Activated CD8-positive, alpha-beta memory T cell treated with anti-CD3 and anti-CD28 coated beads, Interleukin-2, amount 10 ng/mL, durations not matched to agents 7 days and 5 days (primary cell): ENCODE measurements at regions of chr5 and their contacts with region 1.

Region 1: DNA sequence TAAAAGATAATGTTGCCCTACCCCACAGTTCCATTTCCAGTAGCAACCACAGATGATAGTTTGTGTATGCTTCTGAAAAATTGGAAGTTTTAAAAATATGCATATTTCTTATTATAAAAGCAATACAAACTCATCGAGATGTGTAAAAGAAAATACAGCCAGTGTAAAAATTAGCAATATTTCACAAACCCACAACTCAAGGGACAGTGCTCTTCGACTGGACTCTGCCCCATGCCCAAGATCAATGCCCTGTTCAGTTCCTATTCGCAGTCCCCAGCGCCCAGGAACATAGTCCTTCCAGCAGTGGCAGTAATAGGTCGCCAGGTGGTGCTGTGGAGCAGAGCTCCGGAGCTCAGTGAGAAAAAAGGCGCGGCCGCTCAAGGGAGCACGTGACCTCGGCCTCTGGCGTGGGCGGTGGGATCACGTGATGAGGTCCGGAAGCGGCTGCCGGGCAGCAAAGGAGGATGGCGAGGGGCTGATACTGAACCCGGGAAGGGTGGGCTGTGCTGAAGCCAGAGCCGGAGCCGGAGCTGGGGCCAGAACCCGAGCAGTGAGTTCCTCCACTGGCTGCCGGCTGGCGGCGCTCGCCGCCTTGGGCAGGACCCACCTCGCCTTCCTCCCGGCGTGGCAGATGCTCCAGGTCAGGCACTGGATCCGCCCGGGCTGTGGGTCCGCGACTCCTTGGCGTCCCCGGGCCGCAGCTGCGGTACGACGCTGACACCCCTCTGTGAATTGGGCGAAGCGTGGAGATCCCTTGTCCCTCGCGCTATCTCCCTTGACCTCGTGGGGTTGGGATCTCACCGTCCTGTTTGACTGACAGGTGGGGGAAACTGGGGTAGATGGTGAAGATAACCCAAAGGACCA is at the start of gene SLC36A1:
- DNase-seq: peak; percentile 95
- ATAC-seq: peak; percentile 95
- H3K4me3 Mint-ChIP-seq: peak within 1 kb of the TSS; percentile 82
- H3K27ac Mint-ChIP-seq: peak within 1 kb of the TSS; percentile 79
- H3K4me1 Mint-ChIP-seq: peaks cover 23% of the 10 kb centered on the region
- H3K27me3 Mint-ChIP-seq: peaks cover 36% of the 10 kb centered on the region
- total RNA-seq, gene SLC36A1: 6.4 to 6.7 TPM

Region 2: GRCh38 chr5:151463137-151464029 is 16.0 kb after region 1 on chr5:
- CTCF ChIA-PET with region 1: interaction called, 30 read pairs
- DNase-seq: no peak
- ATAC-seq: no peak
- H3K4me3 Mint-ChIP-seq: no peak overlapping the region
- H3K27ac Mint-ChIP-seq: no peak overlapping the region
- H3K4me1 Mint-ChIP-seq: peaks cover 7% of the 10 kb centered on the region
- H3K27me3 Mint-ChIP-seq: no peaks in the 10 kb centered on the region

Region 3: GRCh38 chr5:151499501-151500035 is 52.2 kb after region 1 on chr5:
- CTCF ChIA-PET with region 1: interaction called, 28 read pairs
- DNase-seq: no peak
- ATAC-seq: no peak
- H3K4me3 Mint-ChIP-seq: no peak overlapping the region
- H3K27ac Mint-ChIP-seq: no peak overlapping the region
- H3K4me1 Mint-ChIP-seq: peaks cover 5% of the 10 kb centered on the region
- H3K27me3 Mint-ChIP-seq: no peaks in the 10 kb centered on the region

Region 4: GRCh38 chr5:151651997-151652645 is 204.7 kb after region 1 on chr5:
- CTCF ChIA-PET with region 1: interaction called, 37 read pairs
- DNase-seq: peak; percentile 79
- ATAC-seq: peak; percentile 98
- H3K4me3 Mint-ChIP-seq: no peak overlapping the region
- H3K27ac Mint-ChIP-seq: no peak overlapping the region
- H3K4me1 Mint-ChIP-seq: no peaks in the 10 kb centered on the region
- H3K27me3 Mint-ChIP-seq: peaks cover 18% of the 10 kb centered on the region

Region 5: GRCh38 chr5:151664694-151665585 is 217.5 kb after region 1 on chr5:
- CTCF ChIA-PET with region 1: no interaction called
- DNase-seq: no peak
- ATAC-seq: no peak
- H3K4me3 Mint-ChIP-seq: no peak overlapping the region
- H3K27ac Mint-ChIP-seq: no peak overlapping the region
- H3K4me1 Mint-ChIP-seq: peaks cover 13% of the 10 kb centered on the region
- H3K27me3 Mint-ChIP-seq: peaks cover 5% of the 10 kb centered on the region

Region 6: DNA sequence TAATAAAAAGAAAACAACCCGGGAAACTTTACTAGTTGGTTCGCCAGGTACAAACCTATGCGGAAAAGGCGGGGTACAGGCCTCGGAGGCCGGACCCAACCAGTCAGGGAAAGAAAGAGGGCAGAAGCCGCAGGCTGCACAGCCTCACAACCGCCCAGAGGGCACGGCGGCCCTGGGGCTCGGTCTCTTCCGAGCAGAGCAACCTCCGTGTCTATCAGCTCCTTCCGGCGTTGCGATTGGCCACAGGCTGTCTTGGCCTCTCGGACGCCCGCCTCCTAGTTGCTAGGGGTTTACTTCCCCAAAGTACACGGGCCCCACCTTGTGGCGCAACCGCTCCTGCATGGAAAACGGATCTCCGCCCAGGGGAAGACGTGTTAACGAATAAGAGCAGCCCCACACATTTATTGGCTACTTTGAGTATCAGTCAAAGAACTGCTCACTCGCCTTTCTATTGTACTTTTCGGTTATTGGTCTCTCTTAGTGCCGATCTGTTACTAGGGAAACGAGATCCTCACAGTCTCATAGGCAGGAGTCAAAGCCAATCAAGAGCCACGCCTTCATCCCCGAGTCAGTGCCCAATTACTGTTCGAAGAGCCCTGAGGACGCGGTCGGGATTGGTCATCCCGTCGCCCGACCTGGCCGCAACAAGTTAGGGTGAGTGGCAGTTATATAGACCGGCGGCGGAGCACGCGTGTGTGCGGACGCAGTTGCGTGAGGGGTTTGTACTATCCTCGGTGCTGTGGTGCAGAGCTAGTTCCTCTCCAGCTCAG is 324.0 kb after region 1 on chr5 and contains the start of gene G3BP1:
- CTCF ChIA-PET with region 1: interaction called, 20 read pairs
- DNase-seq: peak; percentile 100
- ATAC-seq: peak; percentile 82
- H3K4me3 Mint-ChIP-seq: peak within 1 kb of the TSS; percentile 83
- H3K27ac Mint-ChIP-seq: peak within 1 kb of the TSS; percentile 92
- H3K4me1 Mint-ChIP-seq: peaks cover 34% of the 10 kb centered on the region
- H3K27me3 Mint-ChIP-seq: no peaks in the 10 kb centered on the region
- total RNA-seq, gene G3BP1: 192 to 279 TPM

Region 7: DNA sequence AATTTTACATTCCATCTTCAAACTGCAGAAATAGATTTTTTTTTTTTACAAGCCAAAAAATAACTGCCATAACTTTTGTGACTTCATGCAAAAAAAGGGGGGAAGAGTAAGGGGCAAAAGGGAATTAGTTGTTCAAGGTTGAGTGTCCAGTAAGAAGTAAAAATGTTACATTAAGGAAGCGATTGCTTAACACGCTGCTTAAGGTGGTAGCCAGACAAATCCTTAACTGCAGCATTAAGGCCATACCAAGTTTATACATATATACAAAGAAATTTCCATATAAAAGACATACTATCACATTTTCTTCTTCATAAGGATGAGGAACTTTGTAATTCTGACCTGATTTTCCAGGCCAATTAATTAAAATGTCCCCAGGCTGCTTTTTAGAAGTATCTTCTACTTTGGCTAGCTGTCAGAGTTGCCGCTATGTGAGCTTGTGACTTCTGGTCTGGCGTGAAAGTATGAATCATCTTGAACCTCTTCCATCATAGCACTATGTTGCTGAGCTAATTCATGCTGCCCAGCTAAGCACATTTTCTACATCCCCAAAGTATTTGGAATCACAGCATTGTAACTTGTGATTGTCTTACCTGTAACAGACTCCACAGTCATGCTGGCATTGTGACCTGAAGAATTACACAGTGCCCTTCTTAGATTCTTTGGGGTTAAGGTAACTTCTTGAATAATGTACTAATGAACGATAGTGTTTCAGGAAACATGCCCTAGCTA is 364.4 kb after region 1 on chr5:
- CTCF ChIA-PET with region 1: no interaction called
- DNase-seq: no peak
- ATAC-seq: no peak
- H3K4me3 Mint-ChIP-seq: no peak overlapping the region
- H3K27ac Mint-ChIP-seq: no peak overlapping the region
- H3K4me1 Mint-ChIP-seq: peaks cover 14% of the 10 kb centered on the region
- H3K27me3 Mint-ChIP-seq: no peaks in the 10 kb centered on the region